ENCODE measurements at regions of chr19 and their contacts with region 1.

Region 1: GRCh38 chr19:58513694-58514563 is 2.1 kb upstream of the SLC27A5 start:
- DNase-seq: peak; percentile 89
- H3K4me3 ChIP-seq: peak overlapping the region in 2 of 3 experiments; percentile 8 to 27
- H3K27ac ChIP-seq: no peak overlapping the region
- H3K4me1 ChIP-seq: peaks cover 12% of the 10 kb centered on the region
- H3K27me3 ChIP-seq: no peaks in the 10 kb centered on the region
- CTCF ChIP-seq: peak; percentile 89 to 96
- POLR2A ChIP-seq: peak; percentile 92

Region 2: GRCh38 chr19:57599761-57600383 is 914.1 kb before region 1 on chr19 and contains the start of gene ZNF530:
- CTCF ChIA-PET with region 1: no interaction called
- POLR2A ChIA-PET with region 1: no interaction called
- dilution Hi-C with region 1: no loop called
- intact Hi-C with region 1: no loop called
- DNase-seq: peak; percentile 81
- H3K4me3 ChIP-seq: peak within 1 kb of the TSS; percentile 38 to 76 (median 61)
- H3K27ac ChIP-seq: no peak within 1 kb of the TSS
- H3K4me1 ChIP-seq: peaks cover 2% of the 10 kb centered on the region
- H3K27me3 ChIP-seq: no peaks in the 10 kb centered on the region
- CTCF ChIP-seq: no peak
- POLR2A ChIP-seq: no peak
- total RNA-seq, gene ZNF530: 4.0 TPM in 2 replicates

Region 3: GRCh38 chr19:58499021-58499927 is 14.7 kb before region 1 on chr19:
- CTCF ChIA-PET with region 1: interaction called, 13 read pairs
- POLR2A ChIA-PET with region 1: no interaction called
- dilution Hi-C with region 1: no loop called
- intact Hi-C with region 1: loop called (anchors 1 kb)
- DNase-seq: peak; percentile 96
- H3K4me3 ChIP-seq: peak overlapping the region in 2 of 3 experiments; percentile 24 to 45
- H3K27ac ChIP-seq: no peak overlapping the region
- H3K4me1 ChIP-seq: peaks cover 4% of the 10 kb centered on the region
- H3K27me3 ChIP-seq: no peaks in the 10 kb centered on the region
- CTCF ChIP-seq: peak; percentile 19 to 43
- POLR2A ChIP-seq: peak; percentile 73

Region 4: GRCh38 chr19:58543826-58544590 is 30.1 kb after region 1 on chr19 and contains the start of gene TRIM28:
- CTCF ChIA-PET with region 1: interaction called, 52 read pairs
- POLR2A ChIA-PET with region 1: interaction called, 20 read pairs
- dilution Hi-C with region 1: no loop called
- intact Hi-C with region 1: loop called (anchors 1 kb)
- DNase-seq: peak; percentile 99
- H3K4me3 ChIP-seq: peak within 1 kb of the TSS; percentile 82 to 94 (median 85)
- H3K27ac ChIP-seq: peak within 1 kb of the TSS; percentile 87
- H3K4me1 ChIP-seq: peaks cover 15% of the 10 kb centered on the region
- H3K27me3 ChIP-seq: peaks cover 8 to 10% of the 10 kb centered on the region in 2 experiments
- CTCF ChIP-seq: no peak
- POLR2A ChIP-seq: peak; percentile 83
- total RNA-seq, gene TRIM28: 377 and 429 TPM in 2 replicates

Region 5: GRCh38 chr19:58572818-58573657 is 59.1 kb after region 1 on chr19 and contains the start of gene MZF1:
- CTCF ChIA-PET with region 1: interaction called, 111 read pairs
- POLR2A ChIA-PET with region 1: interaction called, 17 read pairs
- dilution Hi-C with region 1: no loop called
- intact Hi-C with region 1: loop called (anchors 1 kb)
- DNase-seq: peak; percentile 100
- H3K4me3 ChIP-seq: peak within 1 kb of the TSS; percentile 7 to 70 (median 58)
- H3K27ac ChIP-seq: peak within 1 kb of the TSS; percentile 85
- H3K4me1 ChIP-seq: peaks cover 16% of the 10 kb centered on the region
- H3K27me3 ChIP-seq: no peaks in the 10 kb centered on the region
- CTCF ChIP-seq: peak; percentile 6 to 23
- POLR2A ChIP-seq: no peak
- total RNA-seq, gene MZF1: 18.8 and 26.4 TPM in 2 replicates

Region 6: DNA sequence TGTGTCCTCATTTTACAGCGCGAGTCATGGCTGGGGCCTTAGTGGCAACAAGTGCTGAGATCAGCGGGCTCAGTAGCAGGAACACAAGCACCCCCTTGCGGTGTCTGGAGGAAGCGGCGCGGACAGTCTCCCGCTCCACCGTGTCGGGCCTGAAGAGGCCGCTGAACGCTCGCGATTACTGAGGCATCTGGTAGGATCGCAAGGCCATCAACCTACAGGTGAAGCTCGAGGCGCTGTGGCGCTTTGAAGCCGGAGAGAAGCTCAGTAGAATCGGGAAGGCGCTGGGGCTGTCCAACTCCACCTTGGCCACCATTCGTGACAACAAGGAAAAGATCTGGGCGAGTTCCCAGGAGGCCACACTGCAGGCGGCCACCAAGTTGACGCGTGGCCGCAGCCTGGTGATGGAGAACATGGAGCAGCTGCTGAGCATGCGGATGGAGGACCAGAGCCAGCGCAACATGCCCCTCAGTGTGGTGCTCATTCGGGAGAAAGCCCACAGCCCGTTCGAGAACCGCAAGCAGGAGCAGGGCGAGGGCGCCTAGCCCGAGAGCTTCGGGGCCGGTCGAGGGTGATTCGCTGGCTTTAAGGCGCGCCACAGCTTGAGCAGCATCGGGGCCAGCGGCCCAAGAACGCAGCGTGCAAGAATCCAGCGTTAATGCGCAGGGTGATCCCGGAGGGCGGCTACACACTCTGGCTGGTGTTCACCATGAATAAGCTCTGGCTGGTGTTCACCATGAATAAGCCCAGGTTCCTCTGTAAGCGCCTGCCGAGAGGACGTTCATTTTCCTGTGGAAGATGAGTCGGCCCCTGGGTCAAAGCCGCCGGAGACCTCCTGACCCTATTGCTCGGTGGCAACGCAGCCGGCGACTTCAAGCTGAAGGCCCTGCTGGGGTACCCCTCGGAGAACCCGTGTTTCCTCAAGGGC is 67.6 kb after region 1 on chr19:
- CTCF ChIA-PET with region 1: interaction called, 111 read pairs
- POLR2A ChIA-PET with region 1: interaction called, 17 read pairs
- dilution Hi-C with region 1: no loop called
- intact Hi-C with region 1: loop called (anchors 1 kb)
- DNase-seq: peak; percentile 91
- H3K4me3 ChIP-seq: no peak overlapping the region
- H3K27ac ChIP-seq: no peak overlapping the region
- H3K4me1 ChIP-seq: peaks cover 3% of the 10 kb centered on the region
- H3K27me3 ChIP-seq: no peaks in the 10 kb centered on the region
- CTCF ChIP-seq: peak; percentile 99 to 100
- POLR2A ChIP-seq: no peak